Activated CD8-positive, alpha-beta T cell treated with anti-CD3 and anti-CD28 coated beads, Interleukin-2, amount 10 ng/mL, durations not matched to agents 7 days and 5 days (primary cell): ENCODE measurements at regions of chr2 and their contacts with region 1.

Region 1: GRCh38 chr2:27050281-27050995 is 1.0 kb upstream of the AGBL5 start:
- DNase-seq: peak; percentile 95
- ATAC-seq: peak; percentile 71
- H3K4me3 Mint-ChIP-seq: peak overlapping the region; percentile 93
- H3K27ac Mint-ChIP-seq: peak overlapping the region; percentile 96
- H3K4me1 Mint-ChIP-seq: peaks cover 20% of the 10 kb centered on the region
- H3K27me3 Mint-ChIP-seq: peaks cover 5% of the 10 kb centered on the region

Region 2: DNA sequence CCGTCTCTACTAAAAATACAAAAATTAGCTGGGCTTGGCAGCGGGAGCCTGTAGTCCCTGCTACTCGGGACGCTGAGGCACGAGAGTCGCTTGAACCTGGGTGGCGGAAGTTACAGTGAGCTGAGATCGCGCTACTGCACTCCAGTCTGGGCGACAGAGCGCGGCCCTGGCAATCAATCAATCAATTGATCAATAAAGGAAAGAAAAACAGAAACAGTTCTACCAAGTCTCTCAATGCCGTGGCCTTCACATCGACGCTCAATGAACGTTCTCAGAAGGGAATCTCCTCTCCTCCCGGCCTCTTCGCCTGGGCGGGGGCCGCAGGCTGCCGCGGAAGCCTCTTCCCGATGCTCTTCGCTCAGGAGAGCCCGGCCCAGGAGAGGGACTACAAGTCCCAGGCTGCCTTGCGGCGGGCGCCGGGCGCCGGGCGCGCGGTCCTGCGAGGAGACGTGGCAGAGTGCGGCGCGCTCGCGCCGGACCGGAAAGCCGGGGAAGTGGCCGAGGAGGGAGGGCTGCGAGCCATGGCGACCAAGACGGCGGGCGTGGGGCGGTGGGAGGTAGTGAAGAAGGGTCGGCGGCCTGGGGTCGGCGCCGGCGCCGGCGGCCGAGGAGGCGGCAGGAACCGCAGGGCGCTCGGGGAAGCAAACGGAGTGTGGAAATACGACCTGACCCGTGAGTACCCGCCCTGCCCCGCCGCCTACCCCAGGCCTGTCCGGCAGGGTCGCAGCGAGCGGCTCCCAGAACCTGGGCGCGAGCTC is 17.8 kb before region 1 on chr2 and contains the start of gene TMEM214:
- CTCF ChIA-PET with region 1: interaction called, 12 read pairs
- POLR2A ChIA-PET with region 1: interaction called, 39 read pairs
- DNase-seq: peak; percentile 85
- ATAC-seq: peak; percentile 97
- H3K4me3 Mint-ChIP-seq: peak within 1 kb of the TSS; percentile 95
- H3K27ac Mint-ChIP-seq: peak within 1 kb of the TSS; percentile 91
- H3K4me1 Mint-ChIP-seq: peaks cover 58% of the 10 kb centered on the region
- H3K27me3 Mint-ChIP-seq: no peaks in the 10 kb centered on the region
- total RNA-seq, gene TMEM214: 73.7 to 75.6 TPM

Region 3: GRCh38 chr2:27086090-27086723 is 35.8 kb after region 1 on chr2:
- CTCF ChIA-PET with region 1: interaction called, 16 read pairs
- POLR2A ChIA-PET with region 1: interaction called, 16 read pairs
- DNase-seq: peak; percentile 97
- ATAC-seq: peak; percentile 90
- H3K4me3 Mint-ChIP-seq: peak overlapping the region; percentile 80
- H3K27ac Mint-ChIP-seq: peak overlapping the region; percentile 88
- H3K4me1 Mint-ChIP-seq: peaks cover 59% of the 10 kb centered on the region
- H3K27me3 Mint-ChIP-seq: no peaks in the 10 kb centered on the region

Region 4: DNA sequence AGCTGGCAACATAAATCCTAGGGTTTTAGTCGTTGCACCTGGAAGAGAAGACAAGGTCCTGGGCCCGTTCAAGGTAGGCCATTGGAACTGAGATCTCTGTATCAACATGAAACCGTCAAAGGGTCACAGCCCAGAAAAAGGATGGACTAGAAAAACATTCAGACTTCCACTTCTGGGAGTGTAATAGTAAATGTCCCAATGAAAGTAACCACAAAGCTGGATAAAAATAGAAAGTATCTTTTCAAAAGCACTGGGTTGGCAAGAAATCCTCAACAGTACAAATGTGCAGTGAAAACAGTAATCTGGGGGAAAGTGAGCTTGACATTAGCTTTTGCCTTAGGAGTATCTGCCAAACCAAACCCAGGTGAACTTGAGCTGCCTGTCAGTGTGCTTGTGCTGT is 55.5 kb after region 1 on chr2:
- CTCF ChIA-PET with region 1: no interaction called
- POLR2A ChIA-PET with region 1: no interaction called
- DNase-seq: no peak
- ATAC-seq: no peak
- H3K4me3 Mint-ChIP-seq: no peak overlapping the region
- H3K27ac Mint-ChIP-seq: no peak overlapping the region
- H3K4me1 Mint-ChIP-seq: peaks cover 2% of the 10 kb centered on the region
- H3K27me3 Mint-ChIP-seq: peaks cover 7% of the 10 kb centered on the region